ENCODE measurements at regions of chr1 and their contacts with region 1.

Region 1: GRCh38 chr1:26787706-26788514 is at the start of gene PIGV:
- DNase-seq: peak; percentile 96
- ATAC-seq: peak; percentile 89
- total RNA-seq, gene PIGV: 6.1 TPM

Region 2: DNA sequence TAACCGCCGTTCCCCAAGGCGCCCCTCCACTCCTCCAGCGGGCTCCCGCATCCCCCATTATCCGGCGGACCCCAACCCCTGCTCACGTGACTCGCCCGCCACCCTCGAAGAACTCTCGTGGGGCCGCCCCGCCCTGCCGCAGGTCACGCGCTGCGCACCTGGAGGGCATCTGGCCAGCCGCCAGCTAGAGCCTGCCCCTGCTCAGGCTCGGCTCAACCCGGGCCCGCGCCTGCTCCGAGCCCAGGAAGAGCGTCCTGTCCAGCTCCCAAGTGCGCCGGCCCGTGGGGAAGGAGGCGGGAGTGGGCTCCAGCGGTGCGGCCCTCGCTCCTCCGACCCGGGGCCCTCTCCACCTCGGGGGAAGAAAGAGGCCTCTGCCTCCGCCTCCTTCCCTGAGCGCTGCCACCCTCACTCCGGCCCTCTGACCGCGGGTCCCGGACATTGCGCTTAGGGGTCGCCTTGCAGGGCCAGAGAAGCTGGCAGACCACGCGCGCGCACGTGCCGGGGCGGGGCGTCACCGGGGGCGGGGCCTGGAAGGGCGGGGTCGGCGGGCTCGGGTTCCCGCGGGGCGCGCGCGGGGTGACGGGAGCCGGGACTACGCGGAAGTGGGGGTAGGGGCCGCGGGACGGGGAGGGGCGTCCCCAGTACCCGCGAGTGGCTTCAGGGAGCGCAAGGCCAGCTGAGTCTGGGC is 287.3 kb before region 1 on chr1:
- intact Hi-C with region 1: loop called (anchors 1 kb)
- DNase-seq: peak; percentile 94
- ATAC-seq: peak; percentile 93

Region 3: DNA sequence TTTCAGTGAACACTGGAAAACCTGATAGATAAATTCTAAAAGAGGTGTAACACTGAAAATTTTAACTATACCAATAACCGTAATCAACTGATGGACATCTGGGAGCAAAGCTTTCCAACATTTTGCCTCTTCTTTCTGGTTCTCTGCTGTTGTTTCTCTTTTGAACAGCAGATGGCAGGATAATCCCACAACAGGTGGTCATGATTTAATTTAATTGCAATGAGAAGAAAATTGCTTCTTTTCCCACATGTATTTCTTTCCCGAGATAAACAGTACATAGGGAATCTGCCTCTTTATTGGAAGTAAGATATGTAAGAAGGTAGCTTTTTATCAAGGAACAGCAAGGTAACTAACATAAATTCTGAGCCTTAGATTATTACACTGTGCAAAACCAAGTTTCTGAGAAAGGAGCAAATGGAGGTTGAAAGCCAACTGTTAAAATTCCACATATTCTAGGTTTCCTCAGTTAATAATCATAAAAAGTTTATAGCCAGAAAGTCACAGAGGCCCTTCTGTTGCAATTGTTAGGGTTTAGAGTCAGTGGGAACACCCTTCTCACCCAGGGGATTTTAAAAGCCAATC is 185.4 kb before region 1 on chr1:
- intact Hi-C with region 1: loop called (anchors 1 kb)
- DNase-seq: no peak
- ATAC-seq: no peak

Region 4: DNA sequence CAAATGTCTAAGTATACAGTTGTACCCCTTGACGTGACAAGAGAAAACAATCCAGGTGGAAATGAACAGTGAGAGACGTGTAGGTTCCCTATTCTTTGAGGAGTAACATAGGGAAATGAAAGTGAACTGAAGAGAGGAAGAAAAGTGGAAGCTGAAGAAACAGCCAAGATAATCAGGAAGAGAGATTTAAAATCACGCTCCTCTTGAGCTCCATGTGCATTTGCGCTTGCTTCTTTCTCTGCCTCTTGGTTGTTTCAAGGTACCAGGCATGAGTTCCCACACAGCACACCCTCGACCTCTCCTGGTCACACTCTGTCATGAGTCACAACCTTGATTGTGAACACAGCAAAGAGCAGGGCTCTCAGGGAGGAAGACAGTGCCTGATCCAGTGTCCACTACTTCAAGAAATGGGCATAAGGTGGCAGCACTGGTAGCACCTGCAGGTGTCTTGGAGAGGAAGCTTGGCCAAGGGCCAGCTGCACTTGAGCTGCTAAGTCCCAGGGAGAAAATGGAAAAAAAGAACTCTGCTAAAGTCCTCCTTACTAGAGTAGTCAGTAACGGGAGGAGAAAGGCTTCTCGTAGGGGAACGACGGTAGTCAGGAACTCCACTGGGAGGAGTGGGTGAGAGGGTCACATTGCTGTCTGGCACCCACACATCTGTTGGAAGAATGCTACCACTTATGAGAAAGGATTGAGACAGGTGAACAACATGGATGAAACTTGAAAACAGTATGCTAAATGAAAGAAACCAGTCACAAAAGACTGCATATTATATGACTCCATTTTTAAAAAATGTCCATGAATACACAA is 110.4 kb before region 1 on chr1:
- intact Hi-C with region 1: loop called (anchors 1 kb)
- DNase-seq: peak; percentile 84
- ATAC-seq: peak; percentile 95

Region 5: DNA sequence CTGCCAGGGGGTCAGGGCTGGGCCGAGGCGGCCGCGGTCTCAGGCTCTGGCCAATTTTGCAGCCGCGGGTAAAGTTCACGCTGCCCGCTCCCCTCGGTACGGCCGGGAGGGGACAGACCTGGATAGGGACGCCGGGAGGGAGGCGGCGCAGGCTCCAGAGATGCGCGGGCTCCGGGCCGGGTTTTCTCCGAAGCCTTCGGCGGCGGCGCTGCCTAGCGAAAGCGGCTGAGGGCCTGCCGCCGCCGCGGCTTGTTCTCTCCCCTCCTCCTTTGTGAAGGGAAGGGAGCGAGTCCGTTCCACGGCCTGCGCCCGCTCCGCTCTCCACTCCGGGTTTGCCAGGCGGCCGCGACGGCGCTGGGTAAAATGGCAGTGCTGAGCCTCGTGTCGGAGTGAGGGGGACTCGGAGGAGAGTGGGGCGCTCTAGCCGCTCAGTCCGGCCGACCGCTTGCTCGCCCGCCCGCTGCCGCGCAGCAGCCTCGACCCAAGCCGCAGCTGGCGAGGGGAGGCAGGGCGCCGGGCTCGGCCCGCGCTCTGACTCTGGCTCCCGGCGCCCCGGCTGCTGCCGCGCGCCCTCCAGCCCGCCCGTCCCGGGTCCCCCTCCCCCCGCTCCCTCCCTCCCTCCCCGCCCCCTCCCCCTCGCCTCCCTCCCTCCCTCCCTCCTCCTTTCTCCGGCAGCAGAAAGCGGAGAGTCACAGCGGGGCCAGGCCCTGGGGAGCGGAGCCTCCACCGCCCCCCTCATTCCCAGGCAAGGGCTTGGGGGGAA is 92.4 kb before region 1 on chr1 and contains the start of gene ARID1A:
- intact Hi-C with region 1: loop called (anchors 1 kb)
- DNase-seq: peak; percentile 98
- ATAC-seq: peak; percentile 75
- total RNA-seq, gene ARID1A: 27.5 TPM

Region 6: DNA sequence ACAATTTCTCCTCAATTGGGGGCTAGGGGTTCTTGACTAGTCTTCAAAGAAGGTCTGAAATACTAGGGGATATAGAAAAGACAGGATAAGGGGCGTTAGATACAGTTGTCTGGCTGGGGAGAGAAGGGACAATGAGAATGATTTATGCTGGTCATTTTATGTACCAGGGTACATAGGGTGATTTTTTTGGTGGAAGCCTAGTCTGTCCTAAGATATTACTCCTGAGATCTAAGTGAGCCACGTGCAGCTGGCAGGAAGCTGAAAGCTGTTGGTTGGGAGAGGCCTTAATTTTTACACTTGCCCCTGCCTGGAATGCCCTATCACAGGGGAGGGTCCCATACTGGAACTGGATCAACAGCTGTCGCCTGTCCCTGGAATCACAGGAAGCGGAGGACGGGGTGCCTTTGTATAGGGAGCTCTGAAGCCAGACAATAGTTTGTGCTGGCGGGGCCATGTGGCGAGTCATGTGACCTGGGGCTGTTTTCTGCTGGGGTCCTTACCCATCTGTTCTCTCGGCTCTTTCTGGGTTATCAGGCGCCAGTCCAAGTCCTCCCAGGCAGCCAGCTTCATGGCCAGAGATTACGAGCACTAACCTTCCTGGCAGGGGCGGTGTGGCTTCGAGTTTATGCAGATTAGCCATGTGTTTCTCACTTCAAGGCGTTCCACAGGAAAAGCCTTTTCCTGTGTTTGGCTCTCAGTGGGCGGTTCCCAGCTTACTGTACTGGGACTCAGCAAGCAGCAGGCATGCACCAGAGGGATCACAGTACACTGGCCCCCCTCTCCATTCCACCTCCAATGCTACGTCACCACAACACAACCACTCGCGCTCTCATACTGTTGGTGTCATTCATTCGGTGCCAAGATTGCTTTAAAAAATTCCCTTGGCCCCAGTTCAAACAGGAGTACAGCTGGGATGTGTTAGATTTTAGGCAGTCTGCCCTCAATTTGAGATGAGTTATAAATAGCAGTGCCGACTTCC is 64.6 kb before region 1 on chr1:
- intact Hi-C with region 1: loop called (anchors 1 kb)
- DNase-seq: peak; percentile 86
- ATAC-seq: peak; percentile 98

Region 7: GRCh38 chr1:26744075-26744959 is 43.6 kb before region 1 on chr1:
- intact Hi-C with region 1: loop called (anchors 2 kb)
- DNase-seq: peak; percentile 88
- ATAC-seq: peak; percentile 98

Region 8: GRCh38 chr1:27218736-27219135 is 430.8 kb after region 1 on chr1:
- intact Hi-C with region 1: no loop called
- DNase-seq: no peak
- ATAC-seq: no peak

Measured in Right ventricle myocardium inferior (tissue), 1 donor.